ENCODE measurements at regions of chr17 and their contacts with region 1.

Region 1: DNA sequence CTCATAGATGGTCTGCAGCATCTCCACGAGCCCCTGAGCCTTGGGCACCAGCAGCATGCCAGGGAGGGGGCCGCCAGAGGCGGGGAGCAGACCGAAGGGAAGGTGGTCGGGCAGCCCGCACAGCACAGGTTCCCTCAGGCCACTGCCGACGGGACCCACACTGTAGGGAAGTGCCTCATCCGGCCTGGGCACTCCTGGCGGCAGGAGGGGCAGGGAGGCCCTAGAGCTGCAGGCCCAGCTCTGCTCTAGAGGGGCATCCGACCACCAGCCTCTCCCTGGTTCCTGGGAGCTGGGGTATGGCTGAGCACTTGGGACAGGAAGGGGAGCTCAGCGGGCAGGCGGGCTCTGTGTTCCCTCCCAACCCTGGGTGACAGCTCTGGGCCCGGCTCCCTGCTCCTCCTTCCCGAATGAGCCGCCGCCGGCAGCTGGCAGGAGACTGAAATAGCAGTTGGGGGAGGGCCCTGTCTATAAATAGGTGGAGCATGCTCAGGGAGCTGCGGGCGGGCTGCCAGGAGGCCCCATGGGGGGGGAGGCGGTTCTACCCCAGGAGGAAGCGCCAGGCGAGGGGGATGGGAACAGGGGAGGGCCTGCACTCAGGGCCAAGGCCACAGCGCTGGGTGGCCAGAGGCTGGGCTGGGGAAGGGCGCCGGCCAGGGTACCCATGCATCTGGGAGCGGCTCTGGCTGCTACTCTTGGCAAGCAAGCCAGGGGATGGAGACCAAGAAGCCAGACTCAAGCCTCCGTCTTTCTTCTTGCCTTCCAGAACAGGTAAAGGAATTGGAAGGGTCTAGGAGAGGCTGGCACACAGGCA is 12.4 kb downstream of the HDAC5 start:
- DNase-seq: peak; percentile 96
- H3K4me3 ChIP-seq: peak overlapping the region; percentile 39 to 59
- H3K27ac ChIP-seq: peak overlapping the region; percentile 86 to 97
- H3K4me1 ChIP-seq: peaks cover 36 to 51% of the 10 kb centered on the region in 2 experiments
- H3K27me3 ChIP-seq: no peaks in the 10 kb centered on the region
- CTCF ChIP-seq: no peak
- EP300 ChIP-seq: peak in 1 of 2 experiments; percentile 71; a peak in 2 of 4 replicates
- RAD21 ChIP-seq: no peak

Region 2: GRCh38 chr17:44006598-44007345 is 104.3 kb before region 1 on chr17:
- CTCF ChIA-PET with region 1: interaction called, 12 read pairs
- POLR2A ChIA-PET with region 1: no interaction called
- DNase-seq: peak; percentile 98
- H3K4me3 ChIP-seq: peak overlapping the region; percentile 80 to 90
- H3K27ac ChIP-seq: peak overlapping the region; percentile 57 to 62; a peak in 3 of 4 replicates
- H3K4me1 ChIP-seq: peaks cover 8 to 47% of the 10 kb centered on the region in 2 experiments; a peak in 2 of 4 replicates
- H3K27me3 ChIP-seq: no peaks in the 10 kb centered on the region
- CTCF ChIP-seq: peak; percentile 69
- EP300 ChIP-seq: no peak
- RAD21 ChIP-seq: peak; percentile 63

Region 3: GRCh38 chr17:44070455-44071197 is 40.4 kb before region 1 on chr17 and contains the start of gene G6PC3:
- CTCF ChIA-PET with region 1: interaction called, 17 read pairs
- POLR2A ChIA-PET with region 1: interaction called, 3 read pairs
- DNase-seq: peak; percentile 99
- H3K4me3 ChIP-seq: peak within 1 kb of the TSS; percentile 68 to 82
- H3K27ac ChIP-seq: peak within 1 kb of the TSS; percentile 95 to 96
- H3K4me1 ChIP-seq: peaks cover 9 to 11% of the 10 kb centered on the region in 2 experiments
- H3K27me3 ChIP-seq: no peaks in the 10 kb centered on the region
- CTCF ChIP-seq: no peak; the same call in 1 of the 2 replicates
- EP300 ChIP-seq: peak; percentile 39 to 47; a peak in 2 of 4 replicates
- RAD21 ChIP-seq: no peak
- polyA plus RNA-seq, gene G6PC3: 158 and 166 TPM in 2 replicates

Region 4: GRCh38 chr17:44086364-44087311 is 24.4 kb before region 1 on chr17:
- CTCF ChIA-PET with region 1: interaction called, 23 read pairs
- POLR2A ChIA-PET with region 1: interaction called, 3 read pairs
- DNase-seq: peak; percentile 81
- H3K4me3 ChIP-seq: no peak overlapping the region
- H3K27ac ChIP-seq: peak overlapping the region in 1 of 2 experiments; percentile 75; a peak in 3 of 4 replicates
- H3K4me1 ChIP-seq: peaks cover 12 to 15% of the 10 kb centered on the region in 2 experiments; a peak in 3 of 4 replicates
- H3K27me3 ChIP-seq: no peaks in the 10 kb centered on the region
- CTCF ChIP-seq: no peak
- EP300 ChIP-seq: no peak
- RAD21 ChIP-seq: no peak

Region 5: GRCh38 chr17:44095642-44096496 is 15.2 kb before region 1 on chr17:
- CTCF ChIA-PET with region 1: interaction called, 13 read pairs
- POLR2A ChIA-PET with region 1: no interaction called
- DNase-seq: peak; percentile 85
- H3K4me3 ChIP-seq: peak overlapping the region; percentile 13 to 37; a peak in 1 of 4 replicates
- H3K27ac ChIP-seq: peak overlapping the region; percentile 87 to 92
- H3K4me1 ChIP-seq: peaks cover 11 to 14% of the 10 kb centered on the region in 2 experiments; a peak in 3 of 4 replicates
- H3K27me3 ChIP-seq: no peaks in the 10 kb centered on the region
- CTCF ChIP-seq: peak; percentile 33; the same call in 1 of the 2 replicates
- EP300 ChIP-seq: no peak
- RAD21 ChIP-seq: peak; percentile 37

Region 6: DNA sequence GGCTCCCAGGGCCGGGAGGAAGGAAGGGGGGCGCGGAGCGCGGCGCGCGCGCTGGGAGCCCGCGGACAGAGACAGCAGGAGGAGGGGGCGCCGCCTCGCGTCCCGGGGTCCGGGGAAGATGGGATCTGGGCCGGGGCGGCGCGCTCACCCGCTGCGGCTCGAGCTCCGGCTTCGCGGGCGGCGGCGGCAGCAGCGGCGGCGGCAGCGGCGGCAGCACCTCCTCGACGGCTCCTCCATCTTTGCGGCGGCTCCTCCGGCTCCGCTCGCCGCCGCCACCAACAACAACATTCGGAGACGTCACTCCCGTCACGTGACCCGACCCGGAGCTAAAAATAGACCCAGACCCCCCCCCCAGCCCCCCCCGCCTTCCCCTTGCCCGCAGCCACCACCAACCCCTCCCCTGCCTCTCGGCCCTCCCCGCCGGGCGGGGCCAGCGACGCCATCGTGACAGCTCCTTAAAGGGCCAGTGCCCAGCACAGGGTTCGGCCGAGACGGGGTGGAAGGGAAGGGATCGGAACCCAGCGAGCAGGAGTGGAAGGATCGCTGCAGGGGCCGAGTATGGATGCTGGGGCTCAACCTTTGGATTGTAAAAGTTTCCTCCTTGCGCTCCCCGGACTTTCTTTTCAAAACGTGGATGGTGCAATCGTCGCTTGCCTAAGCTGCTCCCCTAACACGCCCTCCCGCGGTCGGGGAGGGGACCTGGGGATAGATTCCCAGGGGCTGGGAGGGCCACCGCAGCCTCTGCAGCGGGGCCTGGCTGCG is 12.5 kb after region 1 on chr17 and contains the start of gene HDAC5:
- CTCF ChIA-PET with region 1: interaction called, 15 read pairs
- POLR2A ChIA-PET with region 1: interaction called, 7 read pairs
- DNase-seq: peak; percentile 99
- H3K4me3 ChIP-seq: peak within 1 kb of the TSS; percentile 72 to 78
- H3K27ac ChIP-seq: peak within 1 kb of the TSS; percentile 74 to 82
- H3K4me1 ChIP-seq: peaks cover 4 to 26% of the 10 kb centered on the region in 2 experiments; a peak in 2 of 4 replicates
- H3K27me3 ChIP-seq: no peaks in the 10 kb centered on the region
- CTCF ChIP-seq: peak; percentile 66
- EP300 ChIP-seq: no peak
- RAD21 ChIP-seq: peak; percentile 43
- polyA plus RNA-seq, gene HDAC5: 19.0 and 21.0 TPM in 2 replicates

Region 7: GRCh38 chr17:44170499-44171201 is 59.6 kb after region 1 on chr17 and contains the start of gene ASB16:
- CTCF ChIA-PET with region 1: interaction called, 11 read pairs
- POLR2A ChIA-PET with region 1: interaction called, 3 read pairs
- DNase-seq: peak; percentile 48
- H3K4me3 ChIP-seq: no peak within 1 kb of the TSS
- H3K27ac ChIP-seq: no peak within 1 kb of the TSS
- H3K4me1 ChIP-seq: peaks cover 7 to 11% of the 10 kb centered on the region in 2 experiments; a peak in 1 of 4 replicates
- H3K27me3 ChIP-seq: no peaks in the 10 kb centered on the region
- CTCF ChIP-seq: no peak
- EP300 ChIP-seq: no peak
- RAD21 ChIP-seq: no peak
- polyA plus RNA-seq, gene ASB16: not detected in 2 replicates

Measured in SK-N-SH (cell line).